ENCODE measurements at regions of chr11 and their contacts with region 1.

Region 1: GRCh38 chr11:112219476-112220232 is 6.6 kb upstream of the PTS start:
- DNase-seq: peak in 10 of 14 experiments; percentile 4 to 89 (median 31)
- ATAC-seq: peak; percentile 100
- H3K4me3 ChIP-seq: no peak overlapping the region
- H3K4me3 Mint-ChIP-seq: peak overlapping the region; percentile 5
- H3K27ac ChIP-seq: no peak overlapping the region
- H3K27ac Mint-ChIP-seq: no peak overlapping the region
- H3K4me1 ChIP-seq: peaks cover 6% of the 10 kb centered on the region
- H3K4me1 Mint-ChIP-seq: peaks cover 6% of the 10 kb centered on the region
- H3K27me3 ChIP-seq: no peaks in the 10 kb centered on the region
- H3K27me3 Mint-ChIP-seq: no peaks in the 10 kb centered on the region
- CTCF ChIP-seq: peak; percentile 78

Region 2: DNA sequence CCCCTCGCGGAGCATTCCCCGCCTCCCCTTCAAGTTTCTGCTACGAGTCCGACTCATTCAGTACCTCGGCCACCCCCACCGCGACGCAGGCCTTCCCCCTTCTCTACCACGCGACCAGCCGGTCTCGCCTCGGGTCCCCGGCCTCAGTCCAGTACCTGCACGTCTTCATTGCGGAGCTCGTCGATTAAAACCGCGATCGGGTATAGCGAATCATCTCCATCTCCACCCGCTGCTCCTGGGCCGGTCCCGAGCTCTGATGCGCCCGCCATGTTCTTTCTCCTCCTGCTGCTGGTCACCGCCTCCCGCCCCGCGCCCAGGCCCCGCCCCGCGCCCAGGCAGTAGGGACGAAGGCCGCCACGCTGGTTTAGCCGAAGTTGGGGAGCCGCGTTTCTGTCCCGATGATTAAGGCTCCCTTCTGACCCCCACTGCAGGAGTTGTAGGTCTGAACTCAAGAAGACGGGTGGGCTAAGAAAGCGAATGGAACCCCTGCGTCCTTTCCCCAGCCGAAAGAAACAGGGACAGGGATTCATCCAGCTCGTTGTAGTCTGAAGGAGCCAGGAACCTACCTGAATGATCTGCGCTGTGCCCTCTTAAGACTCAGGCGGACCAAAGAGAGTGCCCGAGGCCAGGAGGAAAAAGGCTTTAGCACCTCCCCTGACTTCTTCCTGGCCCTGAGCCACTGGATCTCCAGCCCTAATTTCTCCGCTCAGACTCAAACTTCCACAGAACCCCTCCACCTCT is 453.4 kb before region 1 on chr11 and contains the start of gene PPP2R1B:
- CTCF ChIA-PET with region 1: no interaction called
- POLR2A ChIA-PET with region 1: no interaction called
- intact Hi-C with region 1: loop called in 1 of 2 experiments (anchors 10 kb)
- DNase-seq: peak; percentile 52 to 85 (median 64)
- ATAC-seq: peak; percentile 97
- H3K4me3 ChIP-seq: peak within 1 kb of the TSS; percentile 85
- H3K4me3 Mint-ChIP-seq: peak within 1 kb of the TSS; percentile 99
- H3K27ac ChIP-seq: peak within 1 kb of the TSS; percentile 16 to 67
- H3K27ac Mint-ChIP-seq: peak within 1 kb of the TSS; percentile 70
- H3K4me1 ChIP-seq: peaks cover 12% of the 10 kb centered on the region
- H3K4me1 Mint-ChIP-seq: peaks cover 41% of the 10 kb centered on the region
- H3K27me3 ChIP-seq: no peaks in the 10 kb centered on the region
- H3K27me3 Mint-ChIP-seq: no peaks in the 10 kb centered on the region
- CTCF ChIP-seq: no peak
- total RNA-seq, gene PPP2R1B: 34.5 to 39.2 TPM

Region 3: GRCh38 chr11:112086422-112087191 is 133.0 kb before region 1 on chr11 and contains the starts of genes SDHD and TIMM8B:
- CTCF ChIA-PET with region 1: no interaction called
- POLR2A ChIA-PET with region 1: no interaction called
- intact Hi-C with region 1: loop called in 1 of 2 experiments (anchors 5 kb)
- DNase-seq: peak; percentile 91 to 99 (median 94)
- ATAC-seq: peak; percentile 93
- H3K4me3 ChIP-seq: peak within 1 kb of the TSS; percentile 88
- H3K4me3 Mint-ChIP-seq: peak within 1 kb of the TSS; percentile 99
- H3K27ac ChIP-seq: peak within 1 kb of the TSS; percentile 35 to 75
- H3K27ac Mint-ChIP-seq: peak within 1 kb of the TSS; percentile 94
- H3K4me1 ChIP-seq: peaks cover 32% of the 10 kb centered on the region
- H3K4me1 Mint-ChIP-seq: peaks cover 54% of the 10 kb centered on the region
- H3K27me3 ChIP-seq: no peaks in the 10 kb centered on the region
- H3K27me3 Mint-ChIP-seq: no peaks in the 10 kb centered on the region
- CTCF ChIP-seq: peak; percentile 29
- total RNA-seq, gene SDHD: 24.8 to 29.4 TPM
- total RNA-seq, gene TIMM8B: 9.1 to 10.5 TPM

Region 4: DNA sequence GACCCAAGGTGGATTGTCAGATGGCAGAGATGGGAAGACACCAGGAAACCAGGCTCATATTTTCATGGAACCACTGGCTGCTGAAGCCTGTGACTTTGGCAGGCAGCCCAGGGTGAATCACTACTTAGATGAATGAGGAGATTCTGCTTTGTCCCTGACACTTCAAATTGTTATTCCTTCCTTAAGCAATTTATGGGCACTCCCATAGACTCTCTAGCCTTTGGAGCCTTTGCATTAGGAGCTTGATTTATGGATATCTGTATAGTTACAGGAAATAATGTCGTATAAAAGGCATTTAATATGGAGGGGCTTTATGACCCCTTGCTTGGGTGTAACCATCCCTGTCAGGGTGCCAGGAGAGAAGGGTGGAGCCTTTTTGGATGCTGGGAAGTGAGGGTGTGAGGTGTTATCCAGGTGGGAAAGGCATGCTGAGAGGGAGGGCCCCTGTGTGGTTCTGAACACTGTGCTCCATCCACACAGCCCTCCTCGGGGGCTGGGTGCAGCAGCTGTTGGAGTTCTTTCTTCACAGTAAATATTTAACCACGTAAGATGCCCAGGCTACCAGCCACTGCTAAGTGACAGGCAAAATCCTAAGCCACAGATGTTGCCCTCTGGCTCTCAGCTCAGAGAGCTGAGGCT is 91.1 kb before region 1 on chr11:
- CTCF ChIA-PET with region 1: no interaction called
- POLR2A ChIA-PET with region 1: no interaction called
- intact Hi-C with region 1: no loop called
- DNase-seq: no peak
- ATAC-seq: no peak
- H3K4me3 ChIP-seq: no peak overlapping the region
- H3K4me3 Mint-ChIP-seq: no peak overlapping the region
- H3K27ac ChIP-seq: no peak overlapping the region
- H3K27ac Mint-ChIP-seq: no peak overlapping the region
- H3K4me1 ChIP-seq: no peaks in the 10 kb centered on the region
- H3K4me1 Mint-ChIP-seq: no peaks in the 10 kb centered on the region
- H3K27me3 ChIP-seq: no peaks in the 10 kb centered on the region
- H3K27me3 Mint-ChIP-seq: no peaks in the 10 kb centered on the region
- CTCF ChIP-seq: no peak

Region 5: DNA sequence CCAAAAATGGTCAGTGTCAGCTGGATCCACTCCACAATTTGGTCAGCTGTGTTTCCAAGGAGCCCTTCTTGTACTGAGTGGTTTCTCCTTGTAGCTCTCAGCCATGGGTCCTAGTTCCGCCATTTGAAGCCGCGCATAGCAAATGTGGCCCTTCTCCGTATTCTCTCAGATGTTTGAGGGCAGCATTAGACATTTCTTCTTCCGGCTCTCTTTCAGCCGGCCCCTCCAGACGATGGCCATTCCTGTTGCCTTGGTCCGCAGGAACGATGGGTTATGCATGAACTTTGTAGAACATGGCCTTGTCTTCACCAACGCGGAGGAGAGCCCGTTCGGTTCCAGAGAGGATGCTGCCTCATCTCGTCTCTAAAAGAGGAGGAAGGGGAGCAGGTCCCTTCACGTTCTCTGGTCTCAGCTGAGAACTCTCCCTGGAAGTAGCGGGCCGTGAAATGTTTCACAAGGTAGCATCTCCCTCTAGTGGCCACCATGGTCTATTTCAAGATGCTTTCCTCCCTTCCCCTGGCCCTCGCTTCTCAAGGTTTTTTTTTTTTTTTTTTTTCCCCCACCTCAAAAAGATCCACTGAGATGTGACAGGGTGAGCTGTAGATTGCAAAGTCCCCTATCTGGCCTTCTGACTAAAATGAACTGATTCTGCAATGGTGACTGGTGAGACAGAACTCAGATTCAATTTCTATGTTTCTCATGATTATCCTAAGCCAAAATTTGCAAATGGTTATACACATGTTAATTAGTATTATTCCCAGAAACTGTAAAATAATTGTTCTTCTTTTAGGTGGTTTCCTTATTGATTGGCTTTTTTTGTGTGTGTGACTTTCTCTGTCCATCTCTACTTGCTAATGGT is 60.8 kb after region 1 on chr11:
- CTCF ChIA-PET with region 1: interaction called, 49 read pairs
- POLR2A ChIA-PET with region 1: interaction called, 8 read pairs
- intact Hi-C with region 1: loop called (anchors 1 kb)
- DNase-seq: peak; percentile 38 to 90 (median 56)
- ATAC-seq: peak; percentile 90
- H3K4me3 ChIP-seq: peak overlapping the region; percentile 61
- H3K4me3 Mint-ChIP-seq: peak overlapping the region; percentile 92
- H3K27ac ChIP-seq: no peak overlapping the region
- H3K27ac Mint-ChIP-seq: peak overlapping the region; percentile 64
- H3K4me1 ChIP-seq: peaks cover 22% of the 10 kb centered on the region
- H3K4me1 Mint-ChIP-seq: peaks cover 17% of the 10 kb centered on the region
- H3K27me3 ChIP-seq: no peaks in the 10 kb centered on the region
- H3K27me3 Mint-ChIP-seq: no peaks in the 10 kb centered on the region
- CTCF ChIP-seq: peak; percentile 44

Region 6: GRCh38 chr11:112302231-112302732 is 82.6 kb after region 1 on chr11:
- CTCF ChIA-PET with region 1: no interaction called
- POLR2A ChIA-PET with region 1: no interaction called
- intact Hi-C with region 1: no loop called
- DNase-seq: no peak
- ATAC-seq: no peak
- H3K4me3 ChIP-seq: no peak overlapping the region
- H3K4me3 Mint-ChIP-seq: no peak overlapping the region
- H3K27ac ChIP-seq: no peak overlapping the region
- H3K27ac Mint-ChIP-seq: no peak overlapping the region
- H3K4me1 ChIP-seq: peaks cover 16% of the 10 kb centered on the region
- H3K4me1 Mint-ChIP-seq: peaks cover 28% of the 10 kb centered on the region
- H3K27me3 ChIP-seq: no peaks in the 10 kb centered on the region
- H3K27me3 Mint-ChIP-seq: no peaks in the 10 kb centered on the region
- CTCF ChIP-seq: no peak

Region 7: DNA sequence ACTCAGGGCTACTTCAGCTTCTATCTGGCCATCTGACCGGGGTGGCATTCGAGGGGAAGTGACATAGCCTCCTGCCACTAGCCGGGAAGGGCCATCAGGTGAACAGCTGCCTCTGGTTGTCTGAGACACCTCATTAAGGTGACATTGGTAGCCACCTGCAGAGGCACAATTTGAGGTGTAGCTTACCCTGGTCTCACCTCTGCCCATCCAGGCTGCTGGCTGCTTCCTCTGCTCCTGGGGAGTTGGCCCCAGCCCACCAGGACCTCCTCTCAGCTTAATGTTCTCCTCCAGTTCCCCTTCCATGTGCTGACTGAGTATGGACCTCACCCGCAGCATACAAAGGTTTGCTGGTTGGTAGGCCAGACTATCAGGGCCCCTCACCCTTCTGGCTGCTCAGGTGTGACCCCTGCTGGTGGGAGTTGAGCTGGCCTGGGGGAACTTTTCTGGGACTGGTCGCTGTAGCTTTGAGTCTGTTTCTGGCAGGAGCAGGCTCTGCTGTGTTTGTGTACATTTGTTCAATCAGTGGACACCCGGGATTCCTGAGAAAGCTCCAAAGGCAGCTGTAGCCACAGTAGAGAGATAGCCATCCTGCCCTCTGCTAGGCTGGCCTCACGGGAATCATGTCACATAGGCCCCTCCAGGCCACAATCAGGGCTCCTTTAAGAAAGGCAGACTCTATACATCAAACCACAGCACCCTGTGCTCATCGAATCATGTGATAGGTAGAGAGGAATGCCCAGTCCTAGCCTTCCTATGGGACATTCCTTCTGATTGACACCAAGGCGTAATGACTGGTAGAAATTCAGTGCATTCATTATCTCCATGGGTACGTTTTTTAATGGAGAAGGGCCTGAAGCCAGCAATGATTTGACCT is 336.1 kb after region 1 on chr11:
- CTCF ChIA-PET with region 1: interaction called, 15 read pairs
- POLR2A ChIA-PET with region 1: no interaction called
- intact Hi-C with region 1: loop called (anchors 1 to 2 kb)
- DNase-seq: peak; percentile 50 to 83 (median 60)
- ATAC-seq: peak; percentile 74
- H3K4me3 ChIP-seq: no peak overlapping the region
- H3K4me3 Mint-ChIP-seq: no peak overlapping the region
- H3K27ac ChIP-seq: no peak overlapping the region
- H3K27ac Mint-ChIP-seq: no peak overlapping the region
- H3K4me1 ChIP-seq: peaks cover 6% of the 10 kb centered on the region
- H3K4me1 Mint-ChIP-seq: no peaks in the 10 kb centered on the region
- H3K27me3 ChIP-seq: peaks cover 0 to 4% of the 10 kb centered on the region in 2 experiments
- H3K27me3 Mint-ChIP-seq: no peaks in the 10 kb centered on the region
- CTCF ChIP-seq: peak; percentile 73

Region 8: GRCh38 chr11:113289431-113290187 is 1070.0 kb after region 1 on chr11:
- CTCF ChIA-PET with region 1: interaction called, 4 read pairs
- POLR2A ChIA-PET with region 1: no interaction called
- intact Hi-C with region 1: loop called (anchors 1 to 2 kb)
- DNase-seq: peak; percentile 24 to 79 (median 48)
- ATAC-seq: peak; percentile 98
- H3K4me3 ChIP-seq: no peak overlapping the region
- H3K4me3 Mint-ChIP-seq: no peak overlapping the region
- H3K27ac ChIP-seq: no peak overlapping the region
- H3K27ac Mint-ChIP-seq: no peak overlapping the region
- H3K4me1 ChIP-seq: peaks cover 4% of the 10 kb centered on the region
- H3K4me1 Mint-ChIP-seq: no peaks in the 10 kb centered on the region
- H3K27me3 ChIP-seq: peaks cover 0 to 5% of the 10 kb centered on the region in 2 experiments
- H3K27me3 Mint-ChIP-seq: peaks cover 23% of the 10 kb centered on the region
- CTCF ChIP-seq: peak; percentile 74

Region 9: GRCh38 chr11:113773416-113774173 is 1553.9 kb after region 1 on chr11 and contains the start of gene ZW10:
- CTCF ChIA-PET with region 1: no interaction called
- POLR2A ChIA-PET with region 1: no interaction called
- intact Hi-C with region 1: loop called in 1 of 2 experiments (anchors 5 kb)
- DNase-seq: peak; percentile 86 to 96 (median 91)
- ATAC-seq: peak; percentile 97
- H3K4me3 ChIP-seq: peak within 1 kb of the TSS; percentile 88
- H3K4me3 Mint-ChIP-seq: peak within 1 kb of the TSS; percentile 95
- H3K27ac ChIP-seq: peak within 1 kb of the TSS; percentile 40 to 42
- H3K27ac Mint-ChIP-seq: peak within 1 kb of the TSS; percentile 84
- H3K4me1 ChIP-seq: peaks cover 12% of the 10 kb centered on the region
- H3K4me1 Mint-ChIP-seq: peaks cover 31% of the 10 kb centered on the region
- H3K27me3 ChIP-seq: no peaks in the 10 kb centered on the region
- H3K27me3 Mint-ChIP-seq: no peaks in the 10 kb centered on the region
- CTCF ChIP-seq: peak; percentile 97
- total RNA-seq, gene ZW10: 2.0 to 2.2 TPM